ENCODE measurements at regions of chr2 and their contacts with region 1.

Region 1: DNA sequence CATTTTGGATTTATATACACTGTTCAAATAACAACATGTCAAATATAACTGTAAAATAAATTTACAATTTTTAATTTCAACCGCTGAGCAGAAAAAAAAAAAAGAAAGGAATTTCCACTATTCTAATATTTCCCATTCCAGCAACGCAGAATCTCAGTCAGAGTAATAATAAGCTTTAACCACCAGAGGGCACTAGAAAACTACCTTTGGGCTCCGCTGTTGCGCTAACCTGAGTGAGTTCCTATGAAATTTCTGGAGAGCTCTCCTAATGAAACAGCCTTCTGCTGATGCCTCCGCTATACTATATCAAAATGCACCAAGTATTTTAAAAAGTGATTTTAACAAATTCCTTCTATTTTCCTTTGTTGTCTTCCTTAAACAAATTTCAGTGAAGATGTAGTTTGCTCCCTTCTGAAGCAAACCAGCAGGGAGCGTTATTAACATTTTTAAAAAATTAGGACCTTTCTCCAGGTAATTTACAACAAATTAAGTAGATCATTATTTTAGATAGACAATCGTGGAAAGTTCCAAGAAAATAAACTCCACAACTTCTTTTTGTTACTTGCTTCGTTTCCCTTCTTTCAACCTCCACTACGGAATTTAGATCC is 23.0 kb downstream of the ERMN start:
- DNase-seq: peak; percentile 33
- H3K4me3 Mint-ChIP-seq: no peak overlapping the region
- H3K27ac Mint-ChIP-seq: no peak overlapping the region
- H3K4me1 Mint-ChIP-seq: peaks cover 19% of the 10 kb centered on the region
- H3K27me3 Mint-ChIP-seq: peaks cover 4% of the 10 kb centered on the region

Region 2: GRCh38 chr2:157287160-157287559 is 15.4 kb before region 1 on chr2:
- CTCF ChIA-PET with region 1: interaction called, 17 read pairs
- POLR2A ChIA-PET with region 1: no interaction called
- DNase-seq: no peak
- H3K4me3 Mint-ChIP-seq: no peak overlapping the region
- H3K27ac Mint-ChIP-seq: no peak overlapping the region
- H3K4me1 Mint-ChIP-seq: no peaks in the 10 kb centered on the region
- H3K27me3 Mint-ChIP-seq: no peaks in the 10 kb centered on the region

Region 3: GRCh38 chr2:157336137-157337010 is 33.8 kb after region 1 on chr2:
- CTCF ChIA-PET with region 1: interaction called, 25 read pairs
- POLR2A ChIA-PET with region 1: no interaction called
- DNase-seq: peak; percentile 36
- H3K4me3 Mint-ChIP-seq: no peak overlapping the region
- H3K27ac Mint-ChIP-seq: no peak overlapping the region
- H3K4me1 Mint-ChIP-seq: peaks cover 39% of the 10 kb centered on the region
- H3K27me3 Mint-ChIP-seq: no peaks in the 10 kb centered on the region

Region 4: DNA sequence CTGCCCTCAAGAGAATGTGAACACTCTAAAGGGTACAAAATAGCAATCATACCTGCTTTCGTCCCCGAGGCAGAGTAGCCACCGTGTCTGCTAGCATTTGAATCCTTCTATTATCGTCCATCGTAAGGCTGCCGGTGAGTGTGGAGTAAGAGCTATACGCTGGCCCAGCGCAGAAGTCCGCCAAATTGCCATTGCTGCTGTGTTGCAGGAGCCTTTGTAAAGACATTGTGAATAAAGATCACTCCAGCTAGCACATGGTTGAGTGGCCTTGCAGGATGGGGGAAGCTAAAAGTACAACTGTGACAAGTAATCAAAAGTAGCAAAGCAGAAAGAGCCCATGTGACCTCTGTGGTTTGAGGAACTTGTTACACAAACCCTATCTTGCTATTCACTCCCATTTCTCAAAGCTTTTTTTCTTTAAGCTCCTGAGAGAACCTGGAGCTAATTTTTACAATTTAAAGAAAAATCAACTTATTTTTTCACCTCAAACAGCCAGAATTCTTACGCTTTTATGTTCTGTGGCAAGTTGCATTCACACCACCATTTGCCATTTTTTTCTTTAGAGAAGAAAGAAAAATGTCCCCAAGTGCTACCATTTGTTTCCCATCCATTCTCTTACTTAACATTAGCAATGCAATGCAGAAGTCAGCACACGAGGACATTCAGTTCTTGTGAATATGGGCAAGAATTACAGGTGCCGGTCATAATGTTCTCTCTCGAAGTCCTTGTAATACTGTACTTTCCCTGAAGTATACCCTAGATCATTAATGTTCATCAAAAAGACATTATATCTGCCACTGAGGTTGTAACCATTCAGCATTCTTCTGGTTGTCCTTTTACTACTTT is 141.4 kb after region 1 on chr2 and contains the start of gene CYTIP:
- CTCF ChIA-PET with region 1: interaction called, 14 read pairs
- POLR2A ChIA-PET with region 1: interaction called, 6 read pairs
- DNase-seq: peak; percentile 81
- H3K4me3 Mint-ChIP-seq: peak within 1 kb of the TSS; percentile 91
- H3K27ac Mint-ChIP-seq: peak within 1 kb of the TSS; percentile 96
- H3K4me1 Mint-ChIP-seq: peaks cover 40% of the 10 kb centered on the region
- H3K27me3 Mint-ChIP-seq: no peaks in the 10 kb centered on the region
- total RNA-seq, gene CYTIP: 389 to 406 TPM

Region 5: GRCh38 chr2:157596992-157597681 is 294.5 kb after region 1 on chr2:
- CTCF ChIA-PET with region 1: interaction called, 118 read pairs
- POLR2A ChIA-PET with region 1: no interaction called
- DNase-seq: peak; percentile 58
- H3K4me3 Mint-ChIP-seq: peak overlapping the region; percentile 46
- H3K27ac Mint-ChIP-seq: no peak overlapping the region
- H3K4me1 Mint-ChIP-seq: peaks cover 8% of the 10 kb centered on the region
- H3K27me3 Mint-ChIP-seq: peaks cover 11% of the 10 kb centered on the region

Region 6: GRCh38 chr2:157628477-157629415 is 326.1 kb after region 1 on chr2 and contains the start of gene ACVR1C:
- CTCF ChIA-PET with region 1: interaction called, 42 read pairs
- POLR2A ChIA-PET with region 1: interaction called, 3 read pairs
- DNase-seq: peak; percentile 71
- H3K4me3 Mint-ChIP-seq: peak within 1 kb of the TSS; percentile 87
- H3K27ac Mint-ChIP-seq: peak within 1 kb of the TSS; percentile 24
- H3K4me1 Mint-ChIP-seq: peaks cover 29% of the 10 kb centered on the region
- H3K27me3 Mint-ChIP-seq: peaks cover 10% of the 10 kb centered on the region
- total RNA-seq, gene ACVR1C: 1.6 to 1.9 TPM

Region 7: GRCh38 chr2:158006961-158007719 is 704.5 kb after region 1 on chr2:
- CTCF ChIA-PET with region 1: interaction called, 16 read pairs
- POLR2A ChIA-PET with region 1: no interaction called
- DNase-seq: no peak
- H3K4me3 Mint-ChIP-seq: no peak overlapping the region
- H3K27ac Mint-ChIP-seq: no peak overlapping the region
- H3K4me1 Mint-ChIP-seq: peaks cover 15% of the 10 kb centered on the region
- H3K27me3 Mint-ChIP-seq: peaks cover 1% of the 10 kb centered on the region

Measured in activated CD4-positive, alpha-beta memory T cell treated with anti-CD3 and anti-CD28 coated beads, Interleukin-2, amount 10 ng/mL, durations not matched to agents 7 days and 5 days (primary cell).